HepG2 (cell line): ENCODE measurements at regions of chr12 and their contacts with region 1.

Region 1: GRCh38 chr12:109110988-109111495 is 5.3 kb upstream of the ACACB start:
- DNase-seq: peak; percentile 81
- ATAC-seq: peak; percentile 89
- H3K4me3 ChIP-seq: peak overlapping the region; percentile 69 to 83 (median 78)
- H3K27ac ChIP-seq: peak overlapping the region; percentile 91
- H3K4me1 ChIP-seq: peaks cover 56% of the 10 kb centered on the region
- H3K27me3 ChIP-seq: no peaks in the 10 kb centered on the region
- CTCF ChIP-seq: 0 out of 2 replicates have a peak, but pooled peaks have one; percentile 36
- EP300 ChIP-seq: no peak
- POLR2A ChIP-seq: peak; percentile 53 to 83; a peak in 3 of 4 replicates
- RAD21 ChIP-seq: peak; percentile 39

Region 2: GRCh38 chr12:109154451-109155438 is 43.7 kb after region 1 on chr12:
- CTCF ChIA-PET with region 1: no interaction called
- POLR2A ChIA-PET with region 1: interaction called, 22 read pairs
- in situ Hi-C with region 1: no loop called
- intact Hi-C with region 1: loop called (anchors 5 kb)
- DNase-seq: peak; percentile 51
- ATAC-seq: peak; percentile 96
- H3K4me3 ChIP-seq: peak overlapping the region; percentile 62 to 77 (median 75)
- H3K27ac ChIP-seq: peak overlapping the region; percentile 64
- H3K4me1 ChIP-seq: peaks cover 33% of the 10 kb centered on the region
- H3K27me3 ChIP-seq: no peaks in the 10 kb centered on the region
- CTCF ChIP-seq: peak; percentile 36; the same call in 1 of the 2 replicates
- EP300 ChIP-seq: no peak
- POLR2A ChIP-seq: peak in 1 of 2 experiments; percentile 68; a peak in 2 of 4 replicates
- RAD21 ChIP-seq: peak; percentile 65

Region 3: GRCh38 chr12:109202770-109203169 is 91.7 kb after region 1 on chr12:
- CTCF ChIA-PET with region 1: no interaction called
- POLR2A ChIA-PET with region 1: interaction called, 8 read pairs
- in situ Hi-C with region 1: no loop called
- intact Hi-C with region 1: loop called (anchors 1 kb)
- DNase-seq: no peak
- ATAC-seq: no peak
- H3K4me3 ChIP-seq: no peak overlapping the region
- H3K27ac ChIP-seq: no peak overlapping the region
- H3K4me1 ChIP-seq: peaks cover 20% of the 10 kb centered on the region
- H3K27me3 ChIP-seq: no peaks in the 10 kb centered on the region
- CTCF ChIP-seq: no peak
- EP300 ChIP-seq: no peak
- POLR2A ChIP-seq: no peak
- RAD21 ChIP-seq: no peak

Region 4: GRCh38 chr12:109247831-109248654 is 137.0 kb after region 1 on chr12:
- CTCF ChIA-PET with region 1: no interaction called
- POLR2A ChIA-PET with region 1: interaction called, 5 read pairs
- in situ Hi-C with region 1: no loop called
- intact Hi-C with region 1: loop called (anchors 5 kb)
- DNase-seq: peak; percentile 75
- ATAC-seq: peak; percentile 90
- H3K4me3 ChIP-seq: no peak overlapping the region
- H3K27ac ChIP-seq: peak overlapping the region; percentile 60
- H3K4me1 ChIP-seq: peaks cover 23% of the 10 kb centered on the region
- H3K27me3 ChIP-seq: no peaks in the 10 kb centered on the region
- CTCF ChIP-seq: no peak
- EP300 ChIP-seq: peak in 1 of 2 experiments; percentile 43; a peak in 1 of 4 replicates
- POLR2A ChIP-seq: no peak
- RAD21 ChIP-seq: no peak

Region 5: DNA sequence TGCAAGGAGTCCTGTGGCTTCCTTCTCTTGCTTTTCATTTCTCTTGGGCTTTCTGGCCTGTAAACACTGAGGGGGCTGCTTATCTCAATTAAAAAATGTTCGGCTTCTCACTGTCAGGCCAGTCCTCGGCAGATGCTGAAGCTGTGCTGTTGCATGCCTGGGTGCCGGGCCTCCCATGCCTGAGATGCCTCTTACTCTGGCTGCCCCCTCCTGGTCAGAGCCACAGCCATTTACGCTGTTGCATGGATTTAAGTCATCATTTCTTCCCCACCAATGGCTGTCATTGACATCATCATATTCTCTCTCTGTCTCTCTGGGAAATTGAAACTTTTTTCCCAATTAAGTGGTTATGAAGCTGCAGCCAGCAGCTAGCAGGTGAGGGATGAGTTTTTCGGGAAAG is 144.3 kb after region 1 on chr12:
- CTCF ChIA-PET with region 1: no interaction called
- POLR2A ChIA-PET with region 1: no interaction called
- in situ Hi-C with region 1: no loop called
- intact Hi-C with region 1: loop called (anchors 2 kb)
- DNase-seq: peak; percentile 24
- ATAC-seq: peak; percentile 85
- H3K4me3 ChIP-seq: no peak overlapping the region
- H3K27ac ChIP-seq: no peak overlapping the region
- H3K4me1 ChIP-seq: no peaks in the 10 kb centered on the region
- H3K27me3 ChIP-seq: no peaks in the 10 kb centered on the region
- CTCF ChIP-seq: peak; percentile 63
- EP300 ChIP-seq: no peak
- POLR2A ChIP-seq: no peak
- RAD21 ChIP-seq: peak; percentile 57; the same call in 1 of the 2 replicates